ENCODE measurements at regions of chr12 and their contacts with region 1.

Region 1: DNA sequence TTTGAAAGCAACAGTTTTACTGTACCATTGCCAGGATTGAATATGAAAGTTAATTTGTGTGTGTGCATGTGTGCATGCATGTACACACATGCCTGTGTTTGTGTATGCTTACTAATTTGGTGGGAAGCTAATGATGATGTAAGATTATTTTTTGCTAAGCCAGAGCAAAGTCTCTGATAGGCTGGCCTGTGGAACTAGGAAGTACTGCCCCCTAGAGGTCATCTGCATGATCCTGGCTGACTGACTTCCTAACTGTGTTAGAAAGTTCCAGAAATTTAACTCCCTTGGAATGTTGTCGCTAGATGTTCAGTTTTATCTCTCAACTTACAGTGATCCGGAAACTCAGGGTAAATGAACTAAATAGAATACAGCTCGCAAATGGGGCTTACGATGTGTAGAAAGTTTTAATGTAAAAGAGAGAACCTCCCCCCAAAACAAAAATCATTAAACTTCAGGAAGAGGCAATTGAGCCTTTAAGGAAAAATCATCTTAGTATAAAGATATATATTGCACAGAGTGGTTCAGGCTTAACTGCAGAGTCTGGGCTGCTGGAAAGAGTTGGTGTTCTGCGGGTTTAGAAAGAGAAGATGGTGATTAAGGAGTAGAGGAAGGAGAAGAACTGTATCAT is 34.3 kb upstream of the SLC38A1 start:
- DNase-seq: peak; percentile 39 to 63
- H3K4me3 ChIP-seq: no peak overlapping the region
- H3K4me3 Mint-ChIP-seq: no peak overlapping the region
- H3K27ac Mint-ChIP-seq: no peak overlapping the region
- H3K4me1 ChIP-seq: no peaks in the 10 kb centered on the region
- H3K4me1 Mint-ChIP-seq: no peaks in the 10 kb centered on the region
- H3K27me3 ChIP-seq: no peaks in the 10 kb centered on the region
- H3K27me3 Mint-ChIP-seq: peaks cover 3% of the 10 kb centered on the region
- CTCF ChIP-seq: peak; percentile 57 to 61

Region 2: DNA sequence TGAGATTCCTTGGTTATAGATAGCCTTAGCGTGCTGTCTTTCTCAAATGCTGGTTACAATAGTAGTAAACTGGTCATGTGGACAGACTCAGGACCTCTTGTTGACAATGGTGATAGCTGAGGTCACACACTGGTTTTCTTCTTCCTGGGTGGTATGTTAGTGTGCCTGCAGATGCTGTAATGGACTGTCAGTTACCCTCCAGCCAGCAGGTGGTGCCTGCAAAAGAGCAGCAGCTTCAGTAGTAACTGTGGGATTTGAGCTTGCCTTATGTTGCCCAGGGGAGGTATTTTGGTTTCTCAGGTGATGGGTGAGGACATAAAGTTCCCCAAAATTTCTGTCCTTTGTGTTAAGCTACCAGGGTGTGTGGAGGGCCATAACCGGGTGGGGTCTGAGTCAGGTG is 279.1 kb before region 1 on chr12:
- CTCF ChIA-PET with region 1: no interaction called
- POLR2A ChIA-PET with region 1: no interaction called
- intact Hi-C with region 1: no loop called
- DNase-seq: no peak
- H3K4me3 ChIP-seq: no peak overlapping the region
- H3K4me3 Mint-ChIP-seq: no peak overlapping the region
- H3K27ac Mint-ChIP-seq: no peak overlapping the region
- H3K4me1 ChIP-seq: no peaks in the 10 kb centered on the region
- H3K4me1 Mint-ChIP-seq: peaks cover 21% of the 10 kb centered on the region
- H3K27me3 ChIP-seq: no peaks in the 10 kb centered on the region
- H3K27me3 Mint-ChIP-seq: no peaks in the 10 kb centered on the region
- CTCF ChIP-seq: no peak

Region 3: GRCh38 chr12:46124848-46125619 is 178.1 kb before region 1 on chr12:
- CTCF ChIA-PET with region 1: interaction called, 3 read pairs
- POLR2A ChIA-PET with region 1: no interaction called
- intact Hi-C with region 1: loop called (anchors 2 kb)
- DNase-seq: peak in 1 of 2 experiments; percentile 64
- H3K4me3 ChIP-seq: no peak overlapping the region
- H3K4me3 Mint-ChIP-seq: peak overlapping the region; percentile 35
- H3K27ac Mint-ChIP-seq: no peak overlapping the region
- H3K4me1 ChIP-seq: peaks cover 6% of the 10 kb centered on the region
- H3K4me1 Mint-ChIP-seq: peaks cover 19% of the 10 kb centered on the region
- H3K27me3 ChIP-seq: no peaks in the 10 kb centered on the region
- H3K27me3 Mint-ChIP-seq: peaks cover 18% of the 10 kb centered on the region
- CTCF ChIP-seq: peak; percentile 43 to 84

Region 4: DNA sequence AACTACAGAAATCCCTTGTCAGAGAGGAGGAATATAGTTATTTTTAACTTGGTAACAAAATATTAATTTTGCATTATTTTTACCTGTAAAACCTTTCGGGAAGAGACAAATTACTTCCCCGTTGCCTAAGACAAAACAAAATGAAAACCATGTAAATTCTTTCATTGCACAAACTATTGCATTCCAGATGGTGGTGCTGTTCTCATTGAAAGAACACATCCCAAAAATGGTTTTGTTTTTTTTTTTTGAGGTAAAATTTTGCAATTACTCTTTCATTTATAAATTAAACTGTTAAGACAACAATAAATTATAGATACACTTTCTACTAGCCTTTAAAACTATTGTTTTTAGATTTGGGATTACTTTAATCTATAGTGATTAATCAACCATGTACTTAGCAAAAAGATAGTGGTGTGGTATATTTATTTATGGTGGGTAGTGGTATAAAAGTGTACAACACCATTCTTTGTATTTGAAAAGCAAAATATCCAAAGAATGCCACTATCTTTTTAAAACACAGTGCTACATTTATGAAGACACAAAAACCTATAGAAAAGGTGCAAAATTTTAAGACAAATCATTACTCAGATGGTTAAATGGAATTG is 149.8 kb before region 1 on chr12:
- CTCF ChIA-PET with region 1: no interaction called
- POLR2A ChIA-PET with region 1: no interaction called
- intact Hi-C with region 1: loop called (anchors 1 kb)
- DNase-seq: no peak
- H3K4me3 ChIP-seq: no peak overlapping the region
- H3K4me3 Mint-ChIP-seq: no peak overlapping the region
- H3K27ac Mint-ChIP-seq: no peak overlapping the region
- H3K4me1 ChIP-seq: 0 out of 2 replicates have a peak, but pooled peaks cover 5% of the 10 kb centered on the region
- H3K4me1 Mint-ChIP-seq: peaks cover 17% of the 10 kb centered on the region
- H3K27me3 ChIP-seq: no peaks in the 10 kb centered on the region
- H3K27me3 Mint-ChIP-seq: peaks cover 9% of the 10 kb centered on the region
- CTCF ChIP-seq: peak; percentile 53 to 70